Heart left ventricle (tissue), 16 donors: ENCODE measurements at regions of chr16 and their contacts with region 1.

Region 1: GRCh38 chr16:30429678-30430427 is at the start of gene DCTPP1:
- DNase-seq: peak; percentile 94 to 98 (median 95)
- ATAC-seq: peak; percentile 99
- H3K4me3 ChIP-seq: peak within 1 kb of the TSS; percentile 30 to 88 (median 71)
- H3K27ac ChIP-seq: peak within 1 kb of the TSS in 11 of 12 donors; percentile 36 to 79 (median 73)
- H3K4me1 ChIP-seq: peaks cover 0 to 22% (median 13%) of the 10 kb centered on the region in 12 donors
- H3K27me3 ChIP-seq: no peaks in the 10 kb centered on the region
- CTCF ChIP-seq: peak; percentile 53 to 84 (median 72)
- POLR2A ChIP-seq: peak in 1 of 2 donors; percentile 46
- total RNA-seq, gene DCTPP1: 18.9 to 32.6 (median 28.4) TPM

Region 2: DNA sequence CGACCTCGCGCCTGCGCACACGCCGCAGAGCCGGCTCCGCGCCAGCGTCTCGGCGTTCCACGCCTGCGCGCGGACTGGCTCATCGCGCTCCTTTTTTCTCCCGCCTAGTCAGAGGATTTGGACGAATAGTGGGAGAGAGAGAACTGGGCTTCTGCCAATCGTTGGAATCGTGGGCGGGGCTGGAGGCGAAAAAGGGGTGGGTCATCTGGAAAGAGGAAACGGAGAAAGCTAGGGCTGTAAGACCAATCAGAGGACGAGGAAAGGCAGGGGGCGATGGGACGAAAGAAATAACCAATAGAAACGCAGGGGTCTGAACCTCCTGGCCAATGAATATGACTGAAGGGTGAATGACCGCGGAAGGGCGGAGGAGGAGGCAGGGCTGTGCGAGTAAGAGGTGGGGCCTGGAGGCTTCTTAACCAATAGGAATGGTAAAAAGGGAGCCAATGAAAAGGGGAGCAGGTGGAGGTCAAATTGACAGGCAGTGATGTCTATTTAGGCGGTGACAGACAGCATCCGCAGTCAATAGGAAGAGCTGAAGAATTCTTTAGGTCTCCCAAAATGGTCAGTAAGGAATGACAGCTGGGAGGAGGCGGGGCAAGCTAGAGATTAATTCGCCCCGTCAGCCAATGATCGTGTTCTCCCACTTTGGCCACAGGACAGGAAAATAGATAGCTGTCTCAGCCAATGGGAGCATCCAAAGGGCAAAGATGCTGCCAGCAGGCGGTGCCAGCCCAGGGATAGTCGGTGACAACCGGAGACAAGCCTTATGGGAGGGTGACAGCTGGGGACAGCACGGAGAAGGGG is 59.2 kb before region 1 on chr16 and contains the start of gene TBC1D10B:
- intact Hi-C with region 1: no loop called
- DNase-seq: peak; percentile 97 to 99 (median 98)
- ATAC-seq: peak; percentile 90 to 96 (median 94)
- H3K4me3 ChIP-seq: peak within 1 kb of the TSS; percentile 78 to 99 (median 91)
- H3K27ac ChIP-seq: peak within 1 kb of the TSS; percentile 78 to 95 (median 88)
- H3K4me1 ChIP-seq: peaks cover 0 to 49% (median 35%) of the 10 kb centered on the region in 12 donors
- H3K27me3 ChIP-seq: no peaks in the 10 kb centered on the region
- CTCF ChIP-seq: peak in 9 of 12 donors; percentile 7 to 54 (median 29)
- POLR2A ChIP-seq: peak in 1 of 2 donors; percentile 73
- total RNA-seq, gene TBC1D10B: 16.9 to 33.2 (median 24.2) TPM

Region 3: GRCh38 chr16:30445408-30446202 is 15.8 kb after region 1 on chr16 and contains the start of gene SEPHS2:
- intact Hi-C with region 1: loop called in 2 of 10 experiments (anchors 1 kb)
- DNase-seq: peak; percentile 96 to 98 (median 98)
- ATAC-seq: peak; percentile 92 to 98 (median 98)
- H3K4me3 ChIP-seq: peak within 1 kb of the TSS; percentile 72 to 97 (median 86)
- H3K27ac ChIP-seq: peak within 1 kb of the TSS; percentile 91 to 100 (median 97)
- H3K4me1 ChIP-seq: peaks cover 0 to 36% (median 17%) of the 10 kb centered on the region in 12 donors
- H3K27me3 ChIP-seq: no peaks in the 10 kb centered on the region
- CTCF ChIP-seq: peak in 11 of 12 donors; percentile 21 to 69 (median 44)
- POLR2A ChIP-seq: peak in 1 of 2 donors; percentile 94
- total RNA-seq, gene SEPHS2: 15.1 to 46.2 (median 30.0) TPM

Region 4: DNA sequence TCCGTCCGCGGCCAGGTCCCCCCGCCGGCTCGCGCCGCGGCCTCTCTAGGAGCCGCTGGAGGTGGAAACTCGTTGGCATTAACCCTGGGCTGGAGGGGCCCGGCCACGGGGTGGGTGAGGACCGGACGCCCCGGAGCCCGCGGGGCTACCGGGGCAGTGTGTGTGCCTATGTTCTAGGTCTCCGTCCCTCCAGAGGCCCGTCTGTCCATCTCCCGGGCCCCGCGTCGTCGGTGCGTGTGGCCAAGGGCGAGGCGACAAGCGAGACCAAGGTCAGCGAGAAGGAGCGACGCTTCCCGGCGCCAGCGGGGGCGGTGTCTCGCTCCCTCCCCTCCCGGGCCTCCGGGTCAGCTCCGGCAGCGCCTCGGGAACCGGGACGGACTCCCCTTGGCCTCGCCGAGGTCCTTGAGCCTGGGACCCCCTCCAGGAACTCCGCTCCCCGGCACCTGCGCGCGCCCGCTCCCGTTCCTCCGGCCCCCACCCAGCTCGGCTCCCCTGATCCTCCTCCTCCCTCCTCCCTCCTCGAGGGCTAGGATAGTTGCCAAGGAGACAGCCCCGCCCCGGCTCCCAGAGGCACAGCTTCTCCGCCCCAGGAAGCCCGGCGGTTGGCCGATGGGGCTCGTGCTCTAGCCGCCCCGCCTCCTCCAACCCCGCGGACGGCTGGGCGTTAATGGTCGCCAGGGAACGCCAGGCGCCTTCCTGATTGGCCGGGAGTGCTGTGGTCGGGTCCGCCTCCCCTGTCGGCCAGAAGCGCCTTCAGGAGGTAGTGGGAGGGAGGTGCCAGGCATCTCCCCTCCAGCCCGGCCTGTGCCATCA is 97.2 kb after region 1 on chr16:
- intact Hi-C with region 1: loop called in 1 of 10 experiments (anchors 5 kb)
- DNase-seq: peak; percentile 99 to 100 (median 99)
- ATAC-seq: peak; percentile 93 to 97 (median 94)
- H3K4me3 ChIP-seq: peak overlapping the region; percentile 35 to 98 (median 86)
- H3K27ac ChIP-seq: peak overlapping the region; percentile 95 to 100 (median 99)
- H3K4me1 ChIP-seq: peaks cover 0 to 44% (median 19%) of the 10 kb centered on the region in 12 donors
- H3K27me3 ChIP-seq: no peaks in the 10 kb centered on the region
- CTCF ChIP-seq: peak in 10 of 12 donors; percentile 5 to 53 (median 28)
- POLR2A ChIP-seq: peak; percentile 38 to 86

Region 5: DNA sequence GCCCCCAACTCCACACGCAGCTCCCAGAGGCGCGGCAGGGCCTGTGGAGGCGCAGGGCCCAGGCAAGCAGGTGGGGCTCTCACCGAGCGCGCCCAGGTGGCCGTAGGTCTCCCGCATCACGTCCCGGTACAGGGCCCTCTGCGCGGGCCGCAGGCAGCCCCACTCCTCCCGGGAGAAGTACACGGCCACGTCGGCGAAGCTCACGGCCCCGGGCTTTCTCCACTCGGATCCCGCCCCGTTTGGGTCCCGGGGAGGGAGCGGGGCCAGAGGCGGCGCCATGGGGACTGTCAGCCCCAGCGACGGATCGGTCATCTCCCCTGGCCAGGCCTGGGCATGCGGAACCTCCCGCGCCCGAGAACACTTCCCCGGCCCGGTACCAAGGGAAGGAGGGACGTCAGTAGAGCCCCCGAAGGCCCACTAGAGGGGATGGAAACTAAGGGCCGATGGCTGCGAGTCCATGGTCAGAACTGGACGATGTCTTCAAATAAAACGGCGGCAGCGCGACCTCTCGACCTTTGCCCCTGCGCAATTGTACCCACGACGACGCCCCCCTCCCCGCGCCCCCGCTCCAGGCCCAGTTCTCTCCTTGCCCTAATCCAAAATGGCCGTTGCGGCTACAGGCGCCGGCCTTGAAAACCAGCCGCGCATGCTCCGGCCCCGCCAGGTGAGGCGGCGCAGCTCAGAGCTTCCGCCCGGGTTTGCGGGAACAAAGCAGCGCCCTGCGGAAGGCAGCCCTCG is 104.7 kb after region 1 on chr16 and contains the start of gene ZNF747:
- intact Hi-C with region 1: loop called in 2 of 10 experiments (anchors 2 to 5 kb)
- DNase-seq: peak; percentile 95 to 96 (median 96)
- ATAC-seq: peak; percentile 88 to 95 (median 90)
- H3K4me3 ChIP-seq: peak within 1 kb of the TSS; percentile 31 to 94 (median 82)
- H3K27ac ChIP-seq: peak within 1 kb of the TSS; percentile 86 to 99 (median 94)
- H3K4me1 ChIP-seq: peaks cover 0 to 34% (median 21%) of the 10 kb centered on the region in 12 donors
- H3K27me3 ChIP-seq: no peaks in the 10 kb centered on the region
- CTCF ChIP-seq: peak in 2 of 12 donors; percentile 12 to 13
- POLR2A ChIP-seq: peak in 1 of 2 donors; percentile 63
- total RNA-seq, gene ZNF747: 8.6 to 15.2 (median 10.5) TPM

Region 6: DNA sequence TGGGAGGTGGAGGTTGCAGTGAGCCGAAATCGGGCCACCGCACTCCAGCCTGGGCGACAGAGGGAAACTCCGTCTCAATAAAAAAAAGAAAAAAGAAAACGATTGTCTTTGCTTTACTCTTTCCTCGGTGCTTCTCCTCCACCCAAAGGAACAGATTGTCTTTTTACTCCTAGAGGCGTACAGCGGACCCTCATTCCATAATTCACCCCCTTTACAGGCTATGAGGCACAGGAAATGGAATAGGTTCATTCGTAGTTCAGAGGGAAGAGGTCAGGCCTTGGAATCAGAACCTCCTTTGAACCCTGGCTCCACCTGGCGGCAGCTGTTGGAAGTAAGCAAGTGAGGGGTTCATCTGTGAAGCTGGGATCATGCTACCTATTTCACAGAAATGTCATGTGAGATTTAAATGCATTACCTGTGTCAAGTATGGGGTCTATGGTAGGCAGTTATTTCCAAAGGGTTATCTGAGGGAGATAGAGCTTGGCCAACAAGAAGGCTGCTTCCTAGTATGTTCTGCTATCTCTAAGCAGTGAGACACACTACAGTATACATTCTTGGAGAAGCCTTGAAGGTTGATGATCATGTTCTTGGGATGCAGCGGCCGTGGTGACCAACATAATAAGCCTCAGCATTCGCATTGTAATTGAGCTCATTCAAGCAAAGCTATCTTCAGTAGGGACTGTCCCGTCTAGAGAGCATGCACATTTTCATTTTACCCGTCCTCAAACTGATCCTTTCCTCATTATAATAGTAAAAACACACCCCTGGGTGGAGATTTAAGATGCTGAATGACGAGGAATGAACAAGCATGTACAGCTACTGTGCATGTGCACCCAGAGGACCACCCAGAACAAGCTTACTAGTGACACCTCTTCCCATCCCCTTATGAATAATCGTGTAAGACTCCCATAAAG is 199.0 kb after region 1 on chr16:
- intact Hi-C with region 1: loop called in 7 of 10 experiments (anchors 2 to 10 kb)
- DNase-seq: peak; percentile 77 to 91 (median 86)
- ATAC-seq: peak; percentile 63 to 91 (median 90)
- H3K4me3 ChIP-seq: peak overlapping the region in 9 of 12 donors; percentile 15 to 45 (median 34)
- H3K27ac ChIP-seq: peak overlapping the region in 8 of 12 donors; percentile 34 to 67 (median 55)
- H3K4me1 ChIP-seq: peaks cover 0 to 16% (median 1%) of the 10 kb centered on the region in 12 donors
- H3K27me3 ChIP-seq: no peaks in the 10 kb centered on the region
- CTCF ChIP-seq: peak; percentile 82 to 95 (median 90)
- POLR2A ChIP-seq: no peak

Region 7: DNA sequence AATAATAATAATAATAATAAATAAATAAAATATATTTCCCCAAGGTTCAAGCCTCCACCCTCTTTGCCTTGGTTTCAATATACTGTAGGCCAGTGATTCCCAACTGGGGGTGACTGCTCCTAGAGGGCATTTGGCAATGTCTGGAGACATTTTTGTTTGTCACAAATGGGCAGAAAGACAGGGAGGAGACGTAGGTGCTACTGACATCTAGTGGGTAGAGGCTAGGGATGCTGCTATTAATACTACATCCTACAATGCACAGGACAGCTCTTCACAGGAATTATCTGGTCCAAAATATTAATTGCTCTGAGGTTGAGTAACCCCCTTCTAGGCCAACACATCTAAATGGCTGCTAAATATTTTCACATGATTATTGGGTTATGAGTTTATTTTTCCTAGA is 208.1 kb after region 1 on chr16:
- intact Hi-C with region 1: loop called in 3 of 10 experiments (anchors 5 kb)
- DNase-seq: no peak
- ATAC-seq: no peak
- H3K4me3 ChIP-seq: no peak overlapping the region
- H3K27ac ChIP-seq: no peak overlapping the region
- H3K4me1 ChIP-seq: peaks cover 0 to 19% (median 9%) of the 10 kb centered on the region in 12 donors
- H3K27me3 ChIP-seq: no peaks in the 10 kb centered on the region
- CTCF ChIP-seq: peak in 5 of 12 donors; percentile 17 to 32 (median 28)
- POLR2A ChIP-seq: no peak